Heart left ventricle (tissue), 16 donors: ENCODE measurements at regions of chr9 and their contacts with region 1.

Region 1: GRCh38 chr9:27856054-27856453 is 282.8 kb upstream of the C9orf72 start:
- DNase-seq: no peak
- ATAC-seq: no peak
- H3K4me3 ChIP-seq: no peak overlapping the region
- H3K27ac ChIP-seq: no peak overlapping the region
- H3K4me1 ChIP-seq: no peaks in the 10 kb centered on the region
- H3K27me3 ChIP-seq: no peaks in the 10 kb centered on the region
- CTCF ChIP-seq: no peak
- POLR2A ChIP-seq: no peak

Region 2: DNA sequence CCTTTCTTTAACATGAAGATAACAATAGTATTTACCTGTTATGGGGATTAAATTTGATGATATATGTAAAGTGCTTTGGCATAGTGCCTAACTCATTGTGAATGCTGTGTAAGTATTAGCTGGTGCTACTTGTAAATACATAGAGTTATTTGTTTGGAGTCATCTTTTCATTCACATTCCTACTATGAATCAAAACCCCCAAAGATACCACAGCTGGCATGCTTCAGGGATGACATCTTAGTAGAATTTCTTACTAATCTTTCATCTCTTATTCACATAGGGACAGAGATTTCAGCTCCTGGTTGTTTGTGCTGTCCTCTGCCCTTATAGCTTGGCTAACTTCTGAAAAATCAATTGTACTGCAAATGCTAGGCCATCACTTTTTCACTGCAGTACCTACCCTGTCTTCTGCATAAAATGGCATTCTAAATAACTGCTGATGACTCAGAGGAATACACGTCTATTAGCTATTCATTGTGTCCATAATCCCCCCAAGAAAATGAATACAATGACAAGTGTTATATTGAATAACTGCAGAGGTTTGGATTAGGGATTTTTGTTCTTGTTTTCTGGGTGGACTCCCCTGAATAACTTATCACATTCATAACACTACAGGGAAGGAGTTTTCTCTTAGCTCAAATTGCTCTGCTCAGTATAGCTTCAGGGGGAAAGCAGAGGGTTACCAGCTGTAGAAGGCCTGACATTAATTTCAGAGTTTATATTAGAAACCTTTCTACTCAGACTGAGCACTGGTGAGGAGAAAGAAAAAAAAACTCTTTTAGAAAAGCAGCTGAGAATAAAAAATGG is 90.6 kb before region 1 on chr9:
- intact Hi-C with region 1: no loop called
- DNase-seq: no peak
- ATAC-seq: no peak
- H3K4me3 ChIP-seq: no peak overlapping the region
- H3K27ac ChIP-seq: no peak overlapping the region
- H3K4me1 ChIP-seq: no peaks in the 10 kb centered on the region
- H3K27me3 ChIP-seq: no peaks in the 10 kb centered on the region
- CTCF ChIP-seq: no peak
- POLR2A ChIP-seq: no peak

Region 3: DNA sequence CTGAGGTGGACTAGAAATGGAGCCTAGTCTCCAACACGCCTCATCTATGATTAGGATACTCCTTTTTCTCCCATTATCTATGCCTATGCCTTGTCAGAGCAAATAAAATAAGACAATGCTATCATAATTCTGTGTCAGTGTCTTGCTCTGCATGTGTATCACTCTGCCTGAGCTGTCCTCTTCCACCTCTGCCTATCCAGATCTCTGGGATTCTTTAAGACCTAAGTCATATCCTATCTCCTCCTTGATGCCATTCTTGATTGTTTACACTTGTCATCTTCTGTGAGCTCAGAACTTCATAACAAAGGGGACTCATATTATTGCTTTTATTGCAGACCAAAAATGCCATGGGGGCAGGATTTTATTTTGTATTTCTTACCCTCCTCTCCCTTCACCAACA is 68.4 kb after region 1 on chr9:
- intact Hi-C with region 1: loop called in 1 of 10 experiments (anchors 10 kb)
- DNase-seq: no peak
- ATAC-seq: no peak
- H3K4me3 ChIP-seq: no peak overlapping the region
- H3K27ac ChIP-seq: no peak overlapping the region
- H3K4me1 ChIP-seq: no peaks in the 10 kb centered on the region
- H3K27me3 ChIP-seq: no peaks in the 10 kb centered on the region
- CTCF ChIP-seq: no peak
- POLR2A ChIP-seq: no peak

Region 4: DNA sequence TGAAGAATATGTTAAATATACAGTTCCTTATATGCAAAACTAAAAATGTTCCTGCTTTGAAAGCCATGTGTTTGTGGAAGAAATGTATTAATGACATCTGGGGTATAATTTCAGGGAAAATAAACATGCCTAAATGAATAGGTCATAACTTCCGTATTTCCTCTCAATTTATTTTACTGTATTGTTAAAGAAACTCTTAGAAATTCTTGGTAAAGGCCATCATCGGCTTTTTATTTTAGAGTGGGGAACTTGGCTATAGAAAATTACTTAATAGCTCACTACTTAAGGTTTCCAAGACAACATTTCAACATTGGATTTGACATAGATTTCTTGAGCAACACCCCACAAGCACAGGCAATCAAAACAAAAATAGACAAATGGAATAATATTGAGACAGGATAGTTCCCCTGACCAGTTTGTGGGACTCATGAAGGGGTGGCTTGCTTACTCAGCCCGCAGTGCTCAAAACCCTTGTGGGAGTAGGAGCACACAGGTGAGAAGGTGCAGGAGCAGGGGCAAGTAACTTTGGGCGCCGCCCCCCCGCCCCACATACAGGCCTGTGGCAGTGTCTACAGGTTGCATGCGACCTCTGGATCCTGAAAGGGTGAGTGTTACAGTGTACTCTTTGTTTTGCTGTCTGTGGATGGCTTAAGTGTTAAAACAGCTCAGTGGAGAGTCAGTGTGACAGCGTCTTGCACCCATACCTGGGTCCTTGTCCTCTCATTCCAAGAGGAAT is 608.6 kb after region 1 on chr9:
- intact Hi-C with region 1: no loop called
- DNase-seq: no peak
- ATAC-seq: no peak
- H3K4me3 ChIP-seq: no peak overlapping the region
- H3K27ac ChIP-seq: no peak overlapping the region
- H3K4me1 ChIP-seq: no peaks in the 10 kb centered on the region
- H3K27me3 ChIP-seq: no peaks in the 10 kb centered on the region
- CTCF ChIP-seq: no peak
- POLR2A ChIP-seq: no peak